GM10248 (cell line): ENCODE measurements at regions of chr1 and their contacts with region 1.

Region 1: GRCh38 chr1:151639466-151639865 is 27.6 kb downstream of the SNX27 start:
- DNase-seq: no peak
- CTCF ChIP-seq: no peak

Region 2: DNA sequence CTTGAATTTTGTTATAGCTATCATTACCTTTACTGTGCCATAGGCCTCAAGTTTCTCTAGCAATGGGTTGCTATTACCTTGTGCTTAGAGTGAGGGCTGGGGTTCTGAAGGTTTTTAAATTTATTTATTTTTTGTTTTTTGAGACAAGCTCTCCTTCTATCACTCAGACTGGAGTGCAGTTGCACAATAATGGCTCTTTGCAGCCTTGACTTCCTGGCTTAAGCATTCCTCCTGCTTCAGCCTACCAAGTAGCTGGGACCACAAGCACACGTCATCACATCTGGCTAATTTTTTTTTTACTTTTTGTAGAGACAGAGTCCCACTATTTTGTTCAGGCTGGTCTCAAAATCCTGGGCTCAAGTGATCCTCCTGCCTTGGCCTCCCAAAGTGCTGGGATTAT is 13.9 kb after region 1 on chr1:
- CTCF ChIA-PET with region 1: interaction called, 10 read pairs
- POLR2A ChIA-PET with region 1: no interaction called
- DNase-seq: no peak
- CTCF ChIP-seq: no peak

Region 3: GRCh38 chr1:151741516-151741915 is 102.0 kb after region 1 on chr1:
- CTCF ChIA-PET with region 1: no interaction called
- POLR2A ChIA-PET with region 1: no interaction called
- DNase-seq: no peak
- CTCF ChIP-seq: no peak